Calu3 (cell line): ENCODE measurements at regions of chr14 and their contacts with region 1.

Region 1: GRCh38 chr14:60862286-60862685 is 118.6 kb downstream of the TRMT5 start:
- DNase-seq: peak; percentile 84
- H3K4me3 Mint-ChIP-seq: peak overlapping the region; percentile 22
- H3K27ac Mint-ChIP-seq: peak overlapping the region; percentile 71
- H3K4me1 Mint-ChIP-seq: peaks cover 37% of the 10 kb centered on the region
- H3K27me3 Mint-ChIP-seq: no peaks in the 10 kb centered on the region
- CTCF ChIP-seq: no peak

Region 2: DNA sequence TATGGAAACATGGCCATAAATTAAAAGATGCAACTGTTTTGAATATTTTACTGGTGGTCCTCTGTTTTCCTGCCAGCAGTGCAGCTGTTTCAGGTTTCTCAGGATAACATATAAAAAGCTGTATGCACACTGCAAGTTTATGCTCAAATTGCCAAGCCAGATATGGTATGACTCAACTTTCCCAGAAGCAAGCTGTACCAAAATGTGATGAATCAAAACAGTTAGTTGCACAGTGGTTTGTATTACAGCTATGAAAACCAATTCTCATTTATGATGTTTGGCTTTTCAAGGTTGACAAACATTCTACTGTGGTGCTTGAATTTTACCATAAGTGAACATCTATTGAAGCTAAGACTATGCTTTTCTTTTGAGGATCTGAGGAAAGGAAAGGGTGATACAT is 103.1 kb after region 1 on chr14:
- CTCF ChIA-PET with region 1: no interaction called
- intact Hi-C with region 1: loop called (anchors 5 kb)
- DNase-seq: no peak
- H3K4me3 Mint-ChIP-seq: no peak overlapping the region
- H3K27ac Mint-ChIP-seq: no peak overlapping the region
- H3K4me1 Mint-ChIP-seq: no peaks in the 10 kb centered on the region
- H3K27me3 Mint-ChIP-seq: no peaks in the 10 kb centered on the region
- CTCF ChIP-seq: no peak